Activated T-helper 1 cell treated with anti-CD3 and anti-CD28 coated beads, Interleukin-12 subunit alpha, Interleukin-12 subunit beta, Interleukin-2, Interleukin-4 antibody, amounts not matched to agents 30 ng/mL and 10 ng/mL and 1 ng/mL, durations not matched to agents 14 hours and 24 hours and 36 hours (primary cell): ENCODE measurements at regions of chr3 and their contacts with region 1.

Region 1: DNA sequence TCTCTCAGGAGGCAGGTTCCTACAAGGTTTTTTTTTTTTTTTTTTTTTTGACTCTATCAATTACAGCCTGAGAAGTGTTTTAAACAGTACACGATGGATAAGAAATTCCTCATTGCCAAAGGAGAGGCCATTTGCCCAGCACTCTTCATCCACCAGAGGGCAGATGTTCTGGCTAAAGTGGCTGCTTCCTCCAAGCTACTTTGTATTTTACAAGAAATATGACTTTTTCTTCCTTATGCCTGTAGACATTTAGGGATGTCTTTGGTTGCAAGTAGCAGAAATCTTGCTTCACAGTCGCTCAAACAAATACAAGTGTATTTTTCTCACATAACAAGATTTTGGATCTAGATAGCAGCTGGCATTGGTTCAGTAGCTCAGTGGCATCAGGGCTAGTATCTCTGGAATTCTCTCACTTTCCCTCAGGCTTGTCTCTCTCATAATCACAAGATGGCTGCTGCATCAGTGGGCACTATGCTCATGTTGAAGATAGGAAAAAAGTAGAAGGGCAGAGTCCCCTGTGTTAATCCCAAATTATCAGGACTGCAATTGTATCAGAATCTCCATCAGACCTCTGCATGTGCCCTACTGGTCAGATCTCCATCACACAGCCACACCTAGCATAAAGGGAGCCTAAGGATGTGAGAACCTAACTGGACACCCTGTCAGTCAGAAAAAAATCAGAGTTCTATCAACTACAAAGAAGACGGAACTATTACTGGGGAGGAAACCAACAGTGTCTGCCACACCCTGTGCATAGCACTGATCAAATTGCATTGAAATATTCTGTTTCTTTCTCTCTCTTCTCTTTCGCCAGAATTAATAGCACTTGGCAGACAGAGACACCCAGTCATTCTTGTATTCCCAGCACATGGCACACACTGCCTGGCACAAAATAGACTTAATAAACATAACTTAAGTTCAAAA is 138.9 kb upstream of the COL8A1 start:
- DNase-seq: no peak
- H3K4me3 Mint-ChIP-seq: no peak overlapping the region
- H3K27ac Mint-ChIP-seq: no peak overlapping the region
- H3K4me1 Mint-ChIP-seq: no peaks in the 10 kb centered on the region
- H3K27me3 Mint-ChIP-seq: no peaks in the 10 kb centered on the region

Region 2: DNA sequence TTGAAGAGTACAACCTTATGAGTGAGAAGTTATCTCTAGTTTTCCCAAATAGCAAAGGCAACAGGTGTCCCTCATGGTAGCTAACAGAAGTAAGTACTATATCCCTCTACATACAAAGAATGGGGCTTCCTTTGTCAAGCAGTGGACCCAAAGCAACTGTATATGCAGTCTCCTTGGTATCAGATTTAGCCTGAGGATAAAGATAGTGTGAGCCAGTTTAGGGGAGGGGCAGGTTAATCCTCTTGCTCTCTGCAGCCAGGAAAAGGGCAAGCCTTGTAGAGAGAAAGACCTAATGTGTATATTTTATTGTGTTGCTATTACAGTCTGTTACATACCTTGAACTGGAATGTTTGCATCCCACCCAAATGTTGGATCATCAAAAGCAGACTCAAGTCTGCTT is 21.0 kb after region 1 on chr3:
- intact Hi-C with region 1: no loop called
- DNase-seq: no peak
- H3K4me3 Mint-ChIP-seq: no peak overlapping the region
- H3K27ac Mint-ChIP-seq: no peak overlapping the region
- H3K4me1 Mint-ChIP-seq: no peaks in the 10 kb centered on the region
- H3K27me3 Mint-ChIP-seq: no peaks in the 10 kb centered on the region

Region 3: GRCh38 chr3:99532246-99532645 is 32.7 kb after region 1 on chr3:
- intact Hi-C with region 1: loop called (anchors 2 kb)
- DNase-seq: no peak
- H3K4me3 Mint-ChIP-seq: no peak overlapping the region
- H3K27ac Mint-ChIP-seq: no peak overlapping the region
- H3K4me1 Mint-ChIP-seq: no peaks in the 10 kb centered on the region
- H3K27me3 Mint-ChIP-seq: no peaks in the 10 kb centered on the region

Region 4: GRCh38 chr3:99686955-99687612 is 187.6 kb after region 1 on chr3:
- intact Hi-C with region 1: loop called (anchors 1 kb)
- DNase-seq: no peak
- H3K4me3 Mint-ChIP-seq: no peak overlapping the region
- H3K27ac Mint-ChIP-seq: no peak overlapping the region
- H3K4me1 Mint-ChIP-seq: no peaks in the 10 kb centered on the region
- H3K27me3 Mint-ChIP-seq: peaks cover 5% of the 10 kb centered on the region

Region 5: GRCh38 chr3:99753268-99753975 is 253.9 kb after region 1 on chr3:
- intact Hi-C with region 1: loop called (anchors 1 kb)
- DNase-seq: no peak
- H3K4me3 Mint-ChIP-seq: no peak overlapping the region
- H3K27ac Mint-ChIP-seq: no peak overlapping the region
- H3K4me1 Mint-ChIP-seq: no peaks in the 10 kb centered on the region
- H3K27me3 Mint-ChIP-seq: peaks cover 25% of the 10 kb centered on the region